SK-N-SH (cell line): ENCODE measurements at regions of chr7 and their contacts with region 1.

Region 1: GRCh38 chr7:19117091-19117869 is at the start of gene TWIST1:
- DNase-seq: peak; percentile 96
- H3K4me3 ChIP-seq: peak within 1 kb of the TSS; percentile 92 to 100
- H3K27ac ChIP-seq: peak within 1 kb of the TSS; percentile 96 to 100
- H3K4me1 ChIP-seq: peaks cover 7 to 32% of the 10 kb centered on the region in 2 experiments; a peak in 3 of 4 replicates
- H3K27me3 ChIP-seq: no peaks in the 10 kb centered on the region
- CTCF ChIP-seq: no peak
- EP300 ChIP-seq: peak; percentile 69 to 79; a peak in 3 of 4 replicates
- RAD21 ChIP-seq: peak; percentile 18; the same call in 1 of the 2 replicates
- polyA plus RNA-seq, gene TWIST1: 162 and 170 TPM in 2 replicates

Region 2: DNA sequence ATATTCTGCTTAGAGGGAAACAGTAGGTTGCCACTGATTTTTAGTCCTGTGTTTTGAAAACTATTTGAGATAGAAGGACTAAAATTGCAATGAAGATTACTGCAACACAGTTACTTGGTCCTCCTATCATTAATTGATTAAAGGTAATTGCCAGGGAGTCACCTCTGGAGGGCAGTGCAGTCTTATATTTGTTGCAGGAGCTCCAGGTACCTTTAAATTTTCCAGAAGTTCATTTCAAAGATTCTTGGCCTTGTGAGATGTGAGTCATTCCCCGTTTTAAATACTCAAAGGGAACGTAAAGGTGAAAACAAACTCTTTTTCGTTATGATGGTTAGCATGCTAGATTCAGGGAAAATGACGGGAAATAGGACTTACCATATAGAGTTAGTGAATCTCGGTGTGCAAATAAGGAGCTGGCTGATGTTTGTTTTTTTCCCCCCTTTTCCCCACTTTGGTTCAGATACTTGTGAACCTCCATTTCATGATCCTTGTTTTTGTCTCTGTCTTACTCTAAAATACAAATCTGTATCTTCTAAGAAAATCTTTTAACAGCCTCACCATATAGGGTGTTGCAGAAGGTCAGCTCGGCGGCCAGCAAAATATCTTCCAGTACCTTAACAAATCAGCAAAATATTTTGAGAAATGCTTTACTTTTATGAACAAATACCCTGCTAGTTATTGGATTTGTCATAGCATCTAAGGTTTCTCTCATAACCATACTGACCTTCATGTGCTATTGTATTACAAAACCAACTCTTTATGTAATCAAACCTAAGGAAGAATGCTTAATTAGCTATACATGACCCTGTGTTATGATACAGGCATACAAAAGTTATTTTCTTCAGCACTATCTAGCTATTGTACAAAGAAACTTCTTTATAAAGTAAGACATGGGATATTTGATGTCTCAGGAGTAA is 764.7 kb before region 1 on chr7:
- CTCF ChIA-PET with region 1: interaction called, 15 read pairs
- POLR2A ChIA-PET with region 1: interaction called, 3 read pairs
- DNase-seq: peak; percentile 59
- H3K4me3 ChIP-seq: no peak overlapping the region; a peak in 1 of 4 replicates
- H3K27ac ChIP-seq: peak overlapping the region in 1 of 2 experiments; percentile 39; a peak in 2 of 4 replicates
- H3K4me1 ChIP-seq: peaks cover 8 to 36% of the 10 kb centered on the region in 2 experiments; a peak in 3 of 4 replicates
- H3K27me3 ChIP-seq: no peaks in the 10 kb centered on the region
- CTCF ChIP-seq: peak; percentile 97
- EP300 ChIP-seq: no peak
- RAD21 ChIP-seq: peak; percentile 99

Region 3: GRCh38 chr7:18685971-18686370 is 431.3 kb before region 1 on chr7:
- CTCF ChIA-PET with region 1: interaction called, 17 read pairs
- POLR2A ChIA-PET with region 1: interaction called, 4 read pairs
- DNase-seq: no peak
- H3K4me3 ChIP-seq: no peak overlapping the region
- H3K27ac ChIP-seq: 0 out of 4 replicates have a peak overlapping the region, but pooled peaks of 1 of the 2 experiments have one; percentile 1
- H3K4me1 ChIP-seq: peaks cover 0 to 11% of the 10 kb centered on the region in 2 experiments; a peak in 2 of 4 replicates
- H3K27me3 ChIP-seq: no peaks in the 10 kb centered on the region
- CTCF ChIP-seq: no peak
- EP300 ChIP-seq: no peak
- RAD21 ChIP-seq: no peak

Region 4: DNA sequence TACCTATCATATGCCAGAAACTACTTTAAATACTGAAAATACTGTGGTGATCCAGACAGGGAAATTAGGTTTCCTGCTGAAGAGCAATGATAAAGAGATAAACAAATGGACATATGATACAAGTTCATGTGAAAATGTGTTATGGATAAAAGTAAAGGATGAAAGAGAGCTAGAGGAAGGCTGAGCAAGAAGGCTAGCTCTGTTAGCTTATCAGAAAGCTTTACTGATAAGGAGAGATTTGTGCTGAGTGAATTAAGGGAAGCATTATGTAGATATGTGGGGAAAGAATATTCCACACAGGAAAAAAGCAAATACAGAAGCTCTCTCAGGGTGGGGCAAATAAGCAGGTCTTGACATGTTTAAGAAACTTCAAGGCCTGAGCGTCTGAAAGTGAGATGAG is 313.4 kb before region 1 on chr7:
- CTCF ChIA-PET with region 1: interaction called, 4 read pairs
- POLR2A ChIA-PET with region 1: interaction called, 17 read pairs
- DNase-seq: peak; percentile 48
- H3K4me3 ChIP-seq: no peak overlapping the region
- H3K27ac ChIP-seq: peak overlapping the region in 1 of 2 experiments; percentile 96; a peak in 2 of 4 replicates
- H3K4me1 ChIP-seq: peaks cover 0 to 32% of the 10 kb centered on the region in 2 experiments; a peak in 2 of 4 replicates
- H3K27me3 ChIP-seq: no peaks in the 10 kb centered on the region
- CTCF ChIP-seq: no peak
- EP300 ChIP-seq: peak; percentile 23 to 99; a peak in 2 of 4 replicates
- RAD21 ChIP-seq: peak; percentile 54

Region 5: DNA sequence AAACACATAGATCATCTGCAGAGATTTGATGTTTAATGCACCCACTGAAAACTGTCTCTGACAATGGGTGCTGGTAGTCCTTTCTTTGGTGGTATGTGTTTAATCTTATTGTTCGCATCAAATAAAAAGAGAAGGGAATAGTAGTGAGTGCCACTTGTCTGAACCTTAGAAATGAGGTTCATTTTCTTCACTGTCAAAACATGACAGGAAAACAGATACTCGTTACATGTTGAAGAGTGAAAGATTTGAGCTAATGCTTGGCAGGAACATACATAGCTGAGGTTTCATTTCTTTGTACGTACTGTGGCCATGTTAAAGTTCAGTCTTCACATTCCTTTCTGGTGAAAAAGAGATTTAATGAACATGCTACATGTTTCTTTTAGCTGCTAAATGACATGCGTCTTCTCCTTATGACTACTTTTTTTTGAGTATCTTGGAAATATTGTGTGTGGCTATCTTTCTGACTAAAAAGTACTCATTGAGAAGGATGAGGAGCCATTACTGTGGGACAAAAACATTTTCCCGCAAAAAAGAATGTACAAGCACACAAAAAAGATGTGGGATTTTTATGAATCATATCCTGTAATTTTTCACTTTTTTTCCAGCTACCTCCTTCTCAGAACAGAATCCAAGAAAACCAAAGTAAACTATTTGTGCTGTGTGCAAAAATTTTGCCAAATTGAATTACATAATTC is 107.9 kb before region 1 on chr7:
- CTCF ChIA-PET with region 1: no interaction called
- POLR2A ChIA-PET with region 1: no interaction called
- DNase-seq: no peak
- H3K4me3 ChIP-seq: 0 out of 4 replicates have a peak overlapping the region, but pooled peaks of 1 of the 2 experiments have one; percentile 0
- H3K27ac ChIP-seq: peak overlapping the region; percentile 88 to 90
- H3K4me1 ChIP-seq: peaks cover 0 to 17% of the 10 kb centered on the region in 2 experiments; a peak in 3 of 4 replicates
- H3K27me3 ChIP-seq: no peaks in the 10 kb centered on the region
- CTCF ChIP-seq: no peak
- EP300 ChIP-seq: peak in 1 of 2 experiments; percentile 80; a peak in 1 of 4 replicates
- RAD21 ChIP-seq: no peak

Region 6: GRCh38 chr7:19051767-19052375 is 65.4 kb before region 1 on chr7:
- CTCF ChIA-PET with region 1: no interaction called
- POLR2A ChIA-PET with region 1: no interaction called
- DNase-seq: peak; percentile 37
- H3K4me3 ChIP-seq: no peak overlapping the region; a peak in 2 of 4 replicates
- H3K27ac ChIP-seq: no peak overlapping the region
- H3K4me1 ChIP-seq: peaks cover 0 to 4% of the 10 kb centered on the region in 2 experiments; a peak in 1 of 4 replicates
- H3K27me3 ChIP-seq: no peaks in the 10 kb centered on the region
- CTCF ChIP-seq: peak; percentile 69
- EP300 ChIP-seq: no peak
- RAD21 ChIP-seq: no peak

Region 7: GRCh38 chr7:19090526-19090925 is 26.8 kb before region 1 on chr7:
- CTCF ChIA-PET with region 1: interaction called, 7 read pairs
- POLR2A ChIA-PET with region 1: interaction called, 12 read pairs
- DNase-seq: no peak
- H3K4me3 ChIP-seq: no peak overlapping the region
- H3K27ac ChIP-seq: peak overlapping the region; percentile 70 to 100
- H3K4me1 ChIP-seq: peaks cover 36 to 55% of the 10 kb centered on the region in 2 experiments
- H3K27me3 ChIP-seq: no peaks in the 10 kb centered on the region
- CTCF ChIP-seq: no peak
- EP300 ChIP-seq: peak in 1 of 2 experiments; percentile 43; a peak in 1 of 4 replicates
- RAD21 ChIP-seq: no peak

Region 8: GRCh38 chr7:19491821-19492452 is 374.7 kb after region 1 on chr7:
- CTCF ChIA-PET with region 1: interaction called, 45 read pairs
- POLR2A ChIA-PET with region 1: no interaction called
- DNase-seq: peak; percentile 27
- H3K4me3 ChIP-seq: no peak overlapping the region
- H3K27ac ChIP-seq: no peak overlapping the region
- H3K4me1 ChIP-seq: no peaks in the 10 kb centered on the region
- H3K27me3 ChIP-seq: no peaks in the 10 kb centered on the region
- CTCF ChIP-seq: peak; percentile 88
- EP300 ChIP-seq: no peak
- RAD21 ChIP-seq: peak; percentile 64